ENCODE measurements at regions of chr6 and their contacts with region 1.

Region 1: DNA sequence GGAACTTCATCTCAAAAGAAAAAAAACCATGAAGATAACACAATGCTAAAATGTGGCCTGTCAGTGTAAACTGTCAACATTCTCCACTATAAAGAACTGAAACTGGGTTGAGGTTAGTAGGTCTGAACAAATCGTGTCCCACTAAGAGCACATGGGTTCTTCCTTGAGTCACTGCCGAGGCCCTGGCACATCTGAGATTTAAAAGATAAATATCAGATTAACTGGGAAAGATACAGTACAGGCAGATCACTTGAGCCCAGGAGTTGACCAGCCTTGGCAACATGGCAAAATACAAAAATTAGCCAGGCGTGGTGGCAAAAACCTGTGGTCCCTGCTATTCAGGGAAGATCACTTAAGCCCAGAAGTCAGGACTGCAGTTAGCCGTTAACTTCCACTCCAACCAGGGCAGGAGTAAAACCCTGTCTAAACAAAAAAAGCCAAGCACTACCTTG is 5.6 kb downstream of the EEF1A1 start:
- DNase-seq: no peak
- ATAC-seq: peak; percentile 53
- H3K4me3 Mint-ChIP-seq: peak overlapping the region; percentile 72
- H3K27ac Mint-ChIP-seq: peak overlapping the region; percentile 80
- H3K4me1 Mint-ChIP-seq: peaks cover 70% of the 10 kb centered on the region
- H3K27me3 Mint-ChIP-seq: no peaks in the 10 kb centered on the region
- CTCF ChIP-seq: no peak

Region 2: DNA sequence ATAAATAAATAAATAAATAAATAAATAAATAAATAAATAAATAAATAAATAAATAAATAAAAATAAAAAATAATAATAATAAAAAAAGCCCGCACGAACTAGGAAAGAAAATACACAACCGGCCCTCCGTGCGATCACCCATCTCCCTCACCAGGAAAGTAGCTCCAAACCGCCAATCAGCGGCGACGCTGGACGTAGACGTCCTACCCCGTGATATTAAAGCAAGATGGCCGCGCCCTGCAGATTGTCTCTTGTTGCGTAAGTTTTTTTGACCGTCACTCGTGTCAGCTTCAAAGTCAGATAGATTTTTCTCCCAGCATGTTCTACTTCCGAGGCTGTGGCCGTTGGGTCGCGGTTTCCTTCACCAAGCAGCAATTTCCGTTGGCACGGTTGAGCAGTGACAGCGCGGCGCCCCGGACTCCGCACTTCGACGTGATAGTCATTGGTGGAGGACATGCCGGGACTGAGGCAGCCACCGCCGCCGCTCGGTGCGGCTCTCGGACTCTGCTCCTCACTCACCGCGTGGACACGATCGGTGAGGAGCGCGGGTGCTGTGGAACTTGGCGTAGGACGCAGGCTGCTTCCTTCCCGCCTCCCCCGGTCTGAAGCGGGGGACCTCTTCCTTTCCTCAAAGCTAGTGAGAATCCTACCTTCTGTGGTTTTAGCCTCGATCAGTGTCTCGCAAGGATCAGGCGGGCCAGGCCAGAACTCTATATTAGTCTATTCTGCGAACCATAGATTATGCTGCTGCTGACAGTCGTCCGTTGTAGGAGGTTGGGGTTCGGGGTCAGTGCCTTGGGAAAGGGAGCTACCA is 53.5 kb before region 1 on chr6 and contains the start of gene MTO1:
- CTCF ChIA-PET with region 1: interaction called, 4 read pairs
- POLR2A ChIA-PET with region 1: interaction called, 66 read pairs
- intact Hi-C with region 1: no loop called
- DNase-seq: peak; percentile 61
- ATAC-seq: peak; percentile 94
- H3K4me3 Mint-ChIP-seq: peak within 1 kb of the TSS; percentile 97
- H3K27ac Mint-ChIP-seq: peak within 1 kb of the TSS; percentile 97
- H3K4me1 Mint-ChIP-seq: peaks cover 37% of the 10 kb centered on the region
- H3K27me3 Mint-ChIP-seq: no peaks in the 10 kb centered on the region
- CTCF ChIP-seq: no peak
- total RNA-seq, gene MTO1: 58.5 and 59.3 TPM in 2 replicates

Region 3: DNA sequence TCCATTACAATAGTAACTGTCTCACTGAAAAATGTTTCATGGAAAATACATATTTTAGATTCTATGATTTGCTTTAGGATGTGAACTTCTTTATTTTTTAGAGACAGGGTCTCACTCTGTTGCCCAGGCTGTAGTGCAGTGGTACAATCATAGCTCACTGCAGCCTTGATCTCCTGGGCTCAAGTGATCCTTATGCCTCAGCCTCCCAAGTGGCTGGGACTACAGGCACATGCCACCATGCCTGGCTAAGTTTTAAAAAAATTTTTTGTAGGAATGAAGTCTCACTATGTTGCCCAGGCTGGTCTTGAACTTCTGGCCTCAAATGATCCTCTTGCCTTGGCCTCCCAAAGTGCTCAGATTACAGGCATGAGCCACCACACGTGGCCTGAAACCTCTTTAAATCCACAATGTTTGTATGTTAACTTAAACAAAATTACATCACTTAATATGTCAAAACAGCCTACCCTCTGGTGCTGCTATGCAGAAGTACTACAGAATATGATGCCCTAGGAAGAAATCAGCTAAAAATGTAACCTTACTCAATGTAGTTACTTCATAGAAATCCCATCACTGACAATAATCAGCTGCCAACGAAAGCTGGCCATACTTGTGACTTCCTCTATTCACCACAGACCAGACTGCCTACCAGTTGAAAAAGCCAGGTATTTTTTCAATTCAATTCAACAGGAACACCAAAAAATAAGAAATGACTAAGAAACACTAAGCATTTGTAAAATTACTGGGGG is 12.0 kb before region 1 on chr6:
- CTCF ChIA-PET with region 1: interaction called, 3 read pairs
- POLR2A ChIA-PET with region 1: interaction called, 18 read pairs
- intact Hi-C with region 1: no loop called
- DNase-seq: no peak
- ATAC-seq: no peak
- H3K4me3 Mint-ChIP-seq: no peak overlapping the region
- H3K27ac Mint-ChIP-seq: peak overlapping the region; percentile 62
- H3K4me1 Mint-ChIP-seq: peaks cover 4% of the 10 kb centered on the region
- H3K27me3 Mint-ChIP-seq: no peaks in the 10 kb centered on the region
- CTCF ChIP-seq: no peak

Region 4: DNA sequence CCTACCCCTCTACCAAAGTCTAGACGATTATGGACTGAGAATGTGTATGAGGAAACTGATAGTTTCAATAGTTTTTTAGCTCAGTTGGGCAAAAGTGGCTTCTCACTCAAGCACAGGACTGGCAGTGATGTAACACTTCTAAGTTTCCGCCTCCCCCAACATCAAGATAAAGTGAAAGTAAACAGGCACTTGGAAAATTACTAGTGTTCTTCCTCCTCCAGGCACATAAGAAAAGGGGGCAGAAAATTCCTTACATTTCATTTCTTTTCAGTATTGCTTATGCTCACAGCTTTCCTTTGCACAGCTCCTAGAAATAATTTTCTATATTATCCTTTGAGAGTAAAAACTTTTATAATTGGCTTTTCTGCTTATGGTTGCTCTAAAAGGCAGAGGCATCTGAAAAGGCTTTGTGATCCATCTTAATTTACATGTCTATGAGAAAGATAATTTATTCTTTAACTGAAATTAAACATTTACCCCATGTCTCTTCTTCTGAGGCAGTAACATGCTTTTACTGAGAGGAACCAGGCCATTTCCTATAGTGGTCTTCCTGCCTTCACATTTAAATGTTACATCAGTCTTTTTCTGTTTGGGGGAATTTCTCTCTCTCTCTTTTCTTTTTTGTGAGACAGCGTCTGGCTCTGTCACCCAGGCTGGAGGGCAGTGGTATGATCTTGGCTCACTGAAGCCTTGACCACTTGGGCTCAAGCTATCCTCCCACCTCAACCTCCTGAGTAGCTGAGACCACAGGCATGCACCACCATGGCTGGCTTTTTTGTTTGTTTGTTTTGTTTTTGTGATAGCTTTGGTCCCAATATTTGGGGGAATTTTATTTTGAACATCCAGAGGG is 70.6 kb after region 1 on chr6:
- CTCF ChIA-PET with region 1: interaction called, 14 read pairs
- POLR2A ChIA-PET with region 1: interaction called, 301 read pairs
- intact Hi-C with region 1: no loop called
- DNase-seq: no peak
- ATAC-seq: peak; percentile 76
- H3K4me3 Mint-ChIP-seq: peak overlapping the region; percentile 79
- H3K27ac Mint-ChIP-seq: peak overlapping the region; percentile 99
- H3K4me1 Mint-ChIP-seq: peaks cover 38% of the 10 kb centered on the region
- H3K27me3 Mint-ChIP-seq: no peaks in the 10 kb centered on the region
- CTCF ChIP-seq: no peak

Region 5: DNA sequence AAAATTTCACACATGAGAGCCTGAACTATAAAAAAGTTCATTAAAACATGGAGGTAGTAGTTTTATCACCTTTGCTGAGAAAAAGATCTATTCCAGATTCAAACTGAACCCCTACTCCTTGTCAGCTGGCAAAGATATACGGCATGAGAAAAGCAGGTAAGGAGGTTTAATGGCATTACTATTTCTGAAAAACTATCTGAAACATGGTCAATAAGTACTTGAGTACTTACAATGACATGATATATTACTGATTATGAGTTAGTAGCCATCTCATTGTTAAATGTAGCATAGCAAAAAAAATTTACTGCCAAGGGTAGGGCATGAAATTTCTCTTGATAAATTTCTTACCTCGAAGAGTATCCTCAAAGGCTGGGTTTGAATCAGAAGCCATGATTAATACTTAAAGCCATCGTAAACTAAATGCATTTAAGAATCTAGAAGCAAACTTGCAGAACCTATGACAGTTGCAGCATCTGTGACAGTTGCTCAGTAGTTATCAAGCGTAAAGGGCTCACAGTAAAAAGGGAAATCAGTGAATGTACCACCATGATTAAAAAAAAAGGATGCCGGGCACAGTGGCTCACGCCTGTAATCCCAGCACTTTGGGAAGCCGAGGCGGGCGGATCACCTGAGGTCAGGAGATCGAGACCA is 129.8 kb after region 1 on chr6:
- CTCF ChIA-PET with region 1: no interaction called
- POLR2A ChIA-PET with region 1: interaction called, 10 read pairs
- intact Hi-C with region 1: no loop called
- DNase-seq: no peak
- ATAC-seq: peak; percentile 54
- H3K4me3 Mint-ChIP-seq: peak overlapping the region; percentile 82
- H3K27ac Mint-ChIP-seq: peak overlapping the region; percentile 50
- H3K4me1 Mint-ChIP-seq: peaks cover 9% of the 10 kb centered on the region
- H3K27me3 Mint-ChIP-seq: no peaks in the 10 kb centered on the region
- CTCF ChIP-seq: no peak

Region 6: GRCh38 chr6:73929421-73929820 is 414.2 kb after region 1 on chr6:
- CTCF ChIA-PET with region 1: no interaction called
- POLR2A ChIA-PET with region 1: no interaction called
- intact Hi-C with region 1: no loop called
- DNase-seq: no peak
- ATAC-seq: no peak
- H3K4me3 Mint-ChIP-seq: no peak overlapping the region
- H3K27ac Mint-ChIP-seq: no peak overlapping the region
- H3K4me1 Mint-ChIP-seq: no peaks in the 10 kb centered on the region
- H3K27me3 Mint-ChIP-seq: no peaks in the 10 kb centered on the region
- CTCF ChIP-seq: no peak

Measured in activated B cell treated with CpG ODN at 0.5 μM for 24 hours (primary cell).